ENCODE measurements at regions of chr19 and their contacts with region 1.

Region 1: DNA sequence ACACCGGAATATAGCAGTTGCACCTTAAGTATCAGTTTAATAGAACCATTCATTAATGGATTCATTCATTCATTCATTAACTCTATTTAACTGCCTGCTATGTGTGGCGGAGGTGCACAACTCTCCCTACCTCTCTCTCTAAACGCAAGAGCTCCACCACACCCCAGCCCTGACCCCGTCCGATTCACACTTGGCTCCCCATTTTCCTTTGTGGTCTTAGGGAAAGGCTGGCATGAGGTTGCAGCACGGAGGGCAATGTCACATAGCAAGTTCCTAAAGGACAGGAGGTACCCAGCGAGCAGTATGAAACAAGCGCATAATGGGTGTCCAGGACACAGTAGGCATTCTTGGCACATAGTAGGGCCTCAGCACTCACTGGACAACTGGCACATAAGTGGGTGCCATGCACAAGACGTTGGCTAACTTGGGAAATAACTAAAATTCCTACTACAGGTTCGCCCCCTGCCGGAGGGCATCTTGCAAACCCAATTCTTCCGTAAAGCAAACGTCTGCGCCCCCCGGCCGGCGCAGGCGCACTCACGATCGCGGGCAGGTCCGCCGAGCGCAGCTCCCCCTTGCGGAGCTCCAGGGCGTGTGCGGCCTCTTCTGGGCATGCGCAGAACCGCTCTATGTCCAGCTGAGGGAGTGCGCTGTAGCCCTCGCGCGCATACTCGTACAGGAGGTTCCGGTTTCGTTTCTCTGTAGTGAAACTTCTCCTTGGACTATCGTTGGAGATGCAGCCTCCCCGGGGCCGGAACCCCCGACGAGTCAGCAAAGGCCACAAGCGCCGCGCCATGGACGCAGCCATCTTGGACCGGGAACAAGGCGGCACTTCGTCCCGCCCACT is at the start of gene SARS2:
- DNase-seq: peak; percentile 98 to 99
- ATAC-seq: peak; percentile 65 to 69
- H3K4me3 ChIP-seq: peak within 1 kb of the TSS; percentile 66
- H3K27ac ChIP-seq: peak within 1 kb of the TSS; percentile 87
- H3K4me1 ChIP-seq: peaks cover 19% of the 10 kb centered on the region
- CTCF ChIP-seq: peak; percentile 100
- EP300 ChIP-seq: no peak
- POLR2A ChIP-seq: no peak
- RAD21 ChIP-seq: peak; percentile 88 to 98
- polyA plus RNA-seq, gene SARS2: 46.1 and 46.7 TPM in 2 replicates

Region 2: GRCh38 chr19:38514812-38515633 is 415.1 kb before region 1 on chr19:
- CTCF ChIA-PET with region 1: interaction called, 160 read pairs
- POLR2A ChIA-PET with region 1: interaction called, 9 read pairs
- DNase-seq: peak; percentile 83 to 98
- ATAC-seq: peak; percentile 78 to 94
- H3K4me3 ChIP-seq: no peak overlapping the region
- H3K27ac ChIP-seq: peak overlapping the region; percentile 15 to 54; a peak in 4 of 6 replicates
- H3K4me1 ChIP-seq: peaks cover 8% of the 10 kb centered on the region; the same call in 2 of the 3 replicates
- CTCF ChIP-seq: peak; percentile 99
- EP300 ChIP-seq: no peak
- POLR2A ChIP-seq: no peak
- RAD21 ChIP-seq: peak; percentile 98 to 99

Region 3: DNA sequence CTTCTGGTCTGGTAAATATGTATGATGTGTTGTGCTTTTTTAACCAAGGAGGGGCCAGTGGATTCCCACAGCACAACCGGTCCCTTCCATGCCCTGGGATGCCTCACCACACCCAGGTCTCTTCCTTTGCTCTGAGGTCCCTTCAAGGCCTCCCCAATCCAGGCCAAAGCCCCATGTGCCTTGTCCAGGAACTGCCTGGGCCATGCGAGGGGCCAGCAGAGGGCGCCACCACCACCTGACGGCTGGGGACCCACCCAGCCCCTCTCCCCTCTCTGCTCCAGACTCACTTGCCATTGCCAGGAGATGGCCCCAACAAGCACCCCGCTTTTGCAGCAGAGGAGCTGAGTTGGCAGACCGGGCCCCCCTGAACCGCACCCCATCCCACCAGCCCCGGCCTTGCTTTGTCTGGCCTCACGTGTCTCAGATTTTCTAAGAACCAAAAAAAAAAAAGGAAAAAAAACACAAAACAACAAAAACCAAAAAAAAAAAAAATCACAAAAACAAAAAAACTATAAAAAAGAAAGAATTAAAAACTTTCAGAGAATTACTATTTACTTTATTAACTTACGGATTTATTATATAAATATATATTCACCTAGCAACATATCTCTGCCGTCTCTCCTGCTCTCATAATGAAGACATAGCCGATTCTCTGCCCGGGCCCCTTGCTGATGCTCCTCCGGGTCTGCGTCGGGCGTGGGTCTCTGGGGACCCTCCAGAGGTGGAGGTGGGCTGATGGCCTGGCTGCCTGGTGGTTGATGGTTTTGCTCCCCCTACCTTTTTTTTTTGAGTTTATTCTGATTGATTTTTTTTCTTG is 200.3 kb before region 1 on chr19:
- CTCF ChIA-PET with region 1: interaction called, 25 read pairs
- POLR2A ChIA-PET with region 1: interaction called, 14 read pairs
- DNase-seq: peak; percentile 89 to 90
- ATAC-seq: peak; percentile 15 to 71; a peak in 5 of 6 replicates
- H3K4me3 ChIP-seq: no peak overlapping the region
- H3K27ac ChIP-seq: peak overlapping the region; percentile 53 to 84; a peak in 5 of 6 replicates
- H3K4me1 ChIP-seq: peaks cover 84% of the 10 kb centered on the region
- CTCF ChIP-seq: peak; percentile 98
- EP300 ChIP-seq: no peak
- POLR2A ChIP-seq: no peak
- RAD21 ChIP-seq: peak; percentile 81 to 87

Region 4: DNA sequence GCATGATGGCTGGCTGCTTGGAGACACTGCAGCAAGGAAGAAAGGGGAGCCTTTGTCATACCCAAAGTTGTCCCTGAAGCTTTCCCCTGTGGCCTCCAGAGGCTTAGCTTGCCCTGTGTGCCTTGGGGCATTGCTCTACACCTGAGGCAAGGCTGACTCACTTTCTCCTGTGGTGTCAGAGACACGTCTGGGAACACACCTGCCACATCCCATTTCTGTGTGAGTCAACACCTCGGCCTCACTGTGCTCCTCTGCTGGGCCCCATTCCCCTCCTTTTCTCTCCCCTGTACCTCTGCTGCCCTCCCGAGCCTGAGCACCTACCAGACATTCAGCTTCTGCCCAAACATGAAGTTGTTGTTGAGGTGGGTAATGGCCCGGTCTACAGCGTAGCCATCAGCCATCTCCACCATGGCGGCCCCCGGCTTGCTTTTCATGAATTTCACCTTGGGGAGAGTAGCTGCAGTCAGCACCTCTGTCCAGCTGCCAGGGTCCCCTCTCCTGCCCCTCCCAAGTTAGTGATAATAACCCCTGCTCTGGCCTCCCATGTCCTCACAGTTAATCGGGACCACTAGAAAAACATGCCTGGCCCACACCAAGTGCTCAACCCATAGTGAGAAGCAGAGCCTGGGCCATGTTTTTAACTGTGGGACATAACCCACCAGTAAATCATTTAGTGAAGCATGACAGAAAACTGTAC is 91.4 kb before region 1 on chr19:
- CTCF ChIA-PET with region 1: interaction called, 13 read pairs
- POLR2A ChIA-PET with region 1: interaction called, 3 read pairs
- DNase-seq: peak in 1 of 2 experiments; percentile 62
- ATAC-seq: peak; percentile 6 to 8; a peak in 4 of 6 replicates
- H3K4me3 ChIP-seq: no peak overlapping the region
- H3K27ac ChIP-seq: peak overlapping the region; percentile 36 to 76; a peak in 4 of 6 replicates
- H3K4me1 ChIP-seq: peaks cover 92% of the 10 kb centered on the region
- CTCF ChIP-seq: no peak
- EP300 ChIP-seq: no peak
- POLR2A ChIP-seq: no peak
- RAD21 ChIP-seq: 0 out of 5 replicates have a peak, but pooled peaks of 1 of the 2 experiments have one; percentile 26

Region 5: DNA sequence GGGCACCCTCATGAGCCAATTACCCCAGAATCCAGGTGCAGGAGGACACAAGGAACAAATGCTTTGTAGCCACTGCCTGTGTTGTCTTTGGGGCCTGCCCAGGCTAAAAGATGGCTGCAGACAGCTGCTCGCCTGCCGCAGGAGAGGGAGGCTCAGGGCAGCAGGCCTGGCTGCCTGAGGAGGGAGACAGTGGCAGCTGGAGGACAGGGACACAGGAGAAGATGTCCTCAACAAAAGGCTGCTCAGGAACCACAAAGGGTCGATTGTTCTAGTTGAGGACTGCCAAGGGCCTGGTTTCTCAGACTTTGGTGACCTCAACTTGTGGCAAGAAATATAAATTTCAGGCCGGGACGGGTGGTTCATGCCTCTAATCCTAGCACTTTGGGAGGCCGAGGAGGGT is 38.4 kb before region 1 on chr19:
- CTCF ChIA-PET with region 1: interaction called, 26 read pairs
- POLR2A ChIA-PET with region 1: no interaction called
- DNase-seq: no peak
- ATAC-seq: no peak
- H3K4me3 ChIP-seq: no peak overlapping the region
- H3K27ac ChIP-seq: no peak overlapping the region
- H3K4me1 ChIP-seq: no peaks in the 10 kb centered on the region
- CTCF ChIP-seq: no peak
- EP300 ChIP-seq: no peak
- POLR2A ChIP-seq: no peak
- RAD21 ChIP-seq: no peak

Region 6: DNA sequence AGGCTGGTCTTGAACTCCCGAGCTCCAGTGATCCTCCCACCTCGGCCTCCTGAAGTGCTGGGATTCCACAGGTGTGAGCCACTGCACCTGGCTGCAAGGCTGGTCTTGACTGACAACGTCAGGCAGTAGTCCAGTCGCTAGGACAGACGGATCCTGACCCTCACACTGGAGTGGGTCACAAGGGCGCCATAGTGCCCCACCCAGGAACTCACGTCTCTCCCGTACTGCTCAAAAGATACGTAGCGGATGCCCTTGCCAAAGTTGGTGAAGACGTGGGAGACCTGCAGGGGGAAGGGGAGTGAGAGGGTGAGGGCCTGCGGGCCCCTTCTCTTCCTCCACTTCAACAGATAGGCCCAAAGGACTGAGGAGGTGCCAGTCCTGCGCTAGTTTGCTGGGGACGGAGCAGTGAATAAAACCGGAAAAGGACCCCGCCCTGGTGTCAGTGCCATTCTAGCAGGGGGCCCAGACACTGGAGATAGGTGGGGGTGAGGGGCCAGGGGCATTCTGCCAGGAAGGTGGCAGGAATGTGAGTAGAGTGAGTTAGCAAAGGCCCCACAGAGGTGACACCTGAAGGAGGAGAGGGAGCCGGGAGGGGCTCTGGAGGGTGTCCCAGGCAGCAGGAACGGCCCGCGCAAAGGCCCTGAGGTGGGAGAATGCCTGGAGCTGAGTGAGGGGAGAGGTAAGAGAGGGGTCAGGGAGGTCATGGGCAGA is 12.5 kb after region 1 on chr19:
- CTCF ChIA-PET with region 1: interaction called, 245 read pairs
- POLR2A ChIA-PET with region 1: interaction called, 10 read pairs
- DNase-seq: no peak
- ATAC-seq: peak in 1 of 2 experiments; percentile 15; a peak in 3 of 6 replicates
- H3K4me3 ChIP-seq: no peak overlapping the region
- H3K27ac ChIP-seq: no peak overlapping the region
- H3K4me1 ChIP-seq: no peaks in the 10 kb centered on the region
- CTCF ChIP-seq: no peak
- EP300 ChIP-seq: no peak
- POLR2A ChIP-seq: no peak
- RAD21 ChIP-seq: no peak

Measured in A549 (cell line).